ENCODE measurements at regions of chr15 and their contacts with region 1.

Region 1: GRCh38 chr15:68304589-68305337 is 27.2 kb downstream of the FEM1B start:
- DNase-seq: no peak
- H3K4me3 Mint-ChIP-seq: no peak overlapping the region
- H3K27ac Mint-ChIP-seq: no peak overlapping the region
- H3K4me1 Mint-ChIP-seq: peaks cover 14% of the 10 kb centered on the region
- H3K27me3 Mint-ChIP-seq: no peaks in the 10 kb centered on the region

Region 2: GRCh38 chr15:68244235-68244634 is 60.5 kb before region 1 on chr15:
- CTCF ChIA-PET with region 1: interaction called, 84 read pairs
- intact Hi-C with region 1: no loop called
- DNase-seq: no peak
- H3K4me3 Mint-ChIP-seq: no peak overlapping the region
- H3K27ac Mint-ChIP-seq: no peak overlapping the region
- H3K4me1 Mint-ChIP-seq: no peaks in the 10 kb centered on the region
- H3K27me3 Mint-ChIP-seq: peaks cover under 1% of the 10 kb centered on the region

Region 3: GRCh38 chr15:68277603-68278344 is 27.0 kb before region 1 on chr15 and contains the start of gene FEM1B:
- CTCF ChIA-PET with region 1: interaction called, 20 read pairs
- intact Hi-C with region 1: no loop called
- DNase-seq: peak; percentile 89
- H3K4me3 Mint-ChIP-seq: peak within 1 kb of the TSS; percentile 97
- H3K27ac Mint-ChIP-seq: peak within 1 kb of the TSS; percentile 97
- H3K4me1 Mint-ChIP-seq: peaks cover 46% of the 10 kb centered on the region
- H3K27me3 Mint-ChIP-seq: no peaks in the 10 kb centered on the region
- total RNA-seq, gene FEM1B: 30.3 to 34.2 TPM

Region 4: GRCh38 chr15:68352401-68353062 is 47.8 kb after region 1 on chr15:
- CTCF ChIA-PET with region 1: interaction called, 17 read pairs
- intact Hi-C with region 1: no loop called
- DNase-seq: peak; percentile 82
- H3K4me3 Mint-ChIP-seq: no peak overlapping the region
- H3K27ac Mint-ChIP-seq: peak overlapping the region; percentile 87
- H3K4me1 Mint-ChIP-seq: peaks cover 18% of the 10 kb centered on the region
- H3K27me3 Mint-ChIP-seq: no peaks in the 10 kb centered on the region

Region 5: GRCh38 chr15:68389936-68390790 is 85.4 kb after region 1 on chr15:
- CTCF ChIA-PET with region 1: interaction called, 85 read pairs
- intact Hi-C with region 1: no loop called
- DNase-seq: no peak
- H3K4me3 Mint-ChIP-seq: no peak overlapping the region
- H3K27ac Mint-ChIP-seq: no peak overlapping the region
- H3K4me1 Mint-ChIP-seq: no peaks in the 10 kb centered on the region
- H3K27me3 Mint-ChIP-seq: peaks cover 21% of the 10 kb centered on the region

Region 6: GRCh38 chr15:68550481-68551295 is 245.9 kb after region 1 on chr15:
- CTCF ChIA-PET with region 1: interaction called, 6 read pairs
- intact Hi-C with region 1: loop called (anchors 5 kb)
- DNase-seq: peak; percentile 88
- H3K4me3 Mint-ChIP-seq: no peak overlapping the region
- H3K27ac Mint-ChIP-seq: no peak overlapping the region
- H3K4me1 Mint-ChIP-seq: peaks cover 6% of the 10 kb centered on the region
- H3K27me3 Mint-ChIP-seq: peaks cover 33% of the 10 kb centered on the region

Region 7: GRCh38 chr15:68775671-68776476 is 471.1 kb after region 1 on chr15:
- CTCF ChIA-PET with region 1: no interaction called
- intact Hi-C with region 1: no loop called
- DNase-seq: no peak
- H3K4me3 Mint-ChIP-seq: no peak overlapping the region
- H3K27ac Mint-ChIP-seq: no peak overlapping the region
- H3K4me1 Mint-ChIP-seq: peaks cover 2% of the 10 kb centered on the region
- H3K27me3 Mint-ChIP-seq: no peaks in the 10 kb centered on the region

Measured in activated naive CD4-positive, alpha-beta T cell treated with anti-CD3 and anti-CD28 coated beads for 36 hours (primary cell).